Activated naive CD4-positive, alpha-beta T cell treated with anti-CD3 and anti-CD28 coated beads, Interleukin-2, amount 10 ng/mL, durations not matched to agents 7 days and 5 days (primary cell): ENCODE measurements at regions of chr7 and their contacts with region 1.

Region 1: DNA sequence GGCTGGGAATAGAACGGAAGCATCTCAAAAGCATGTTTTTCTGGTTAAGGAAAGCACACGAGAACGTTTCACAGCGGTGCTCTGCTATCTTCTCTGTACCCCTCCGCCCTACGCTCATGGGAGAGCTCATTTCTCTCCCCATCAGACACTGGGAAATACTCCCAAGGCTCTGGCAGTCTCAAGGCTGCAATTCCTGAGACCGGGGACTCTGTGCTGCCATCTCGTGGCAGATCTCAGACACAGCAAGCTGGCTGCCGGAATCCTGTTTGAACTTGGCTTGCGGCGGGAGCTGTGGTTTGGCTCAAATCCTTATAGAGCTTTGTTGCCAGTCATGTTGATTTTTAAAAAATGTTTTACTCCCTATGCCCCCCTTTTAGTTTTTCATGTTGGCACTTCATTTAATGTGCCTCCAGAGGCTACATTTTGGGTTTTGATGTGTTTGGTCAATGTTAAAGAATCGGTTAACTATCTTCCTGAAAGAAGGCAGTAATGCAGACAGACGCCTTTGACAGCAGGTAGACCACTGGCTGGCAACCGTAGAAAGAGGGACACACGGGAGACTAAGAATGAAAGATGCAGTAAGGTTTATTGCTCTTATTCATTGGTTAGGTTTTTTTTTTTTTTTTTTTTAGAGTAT is 27.6 kb downstream of the BMPER start:
- DNase-seq: peak; percentile 73
- H3K4me3 Mint-ChIP-seq: no peak overlapping the region
- H3K27ac Mint-ChIP-seq: no peak overlapping the region
- H3K4me1 Mint-ChIP-seq: no peaks in the 10 kb centered on the region
- H3K27me3 Mint-ChIP-seq: peaks cover 22% of the 10 kb centered on the region

Region 2: DNA sequence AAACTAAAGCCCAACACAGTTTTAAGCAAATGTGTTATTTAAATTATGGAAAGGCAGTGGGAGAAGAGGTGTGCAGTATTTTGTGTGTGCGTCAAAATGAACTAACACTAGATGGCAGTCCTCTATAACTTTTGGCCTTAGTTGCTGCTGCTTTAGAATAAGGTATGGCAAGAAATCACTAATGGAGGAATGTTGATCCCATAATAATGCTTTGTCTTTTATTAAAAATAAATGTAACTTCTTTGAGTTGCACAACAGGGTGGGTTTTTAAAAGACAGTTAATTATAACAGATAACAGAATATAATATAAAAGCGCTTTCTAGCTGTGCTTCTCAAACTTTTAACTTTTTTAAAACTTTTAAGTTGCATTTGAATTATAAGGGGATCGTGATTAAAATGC is 747.2 kb before region 1 on chr7:
- CTCF ChIA-PET with region 1: interaction called, 16 read pairs
- DNase-seq: no peak
- H3K4me3 Mint-ChIP-seq: no peak overlapping the region
- H3K27ac Mint-ChIP-seq: no peak overlapping the region
- H3K4me1 Mint-ChIP-seq: peaks cover 6% of the 10 kb centered on the region
- H3K27me3 Mint-ChIP-seq: no peaks in the 10 kb centered on the region

Region 3: DNA sequence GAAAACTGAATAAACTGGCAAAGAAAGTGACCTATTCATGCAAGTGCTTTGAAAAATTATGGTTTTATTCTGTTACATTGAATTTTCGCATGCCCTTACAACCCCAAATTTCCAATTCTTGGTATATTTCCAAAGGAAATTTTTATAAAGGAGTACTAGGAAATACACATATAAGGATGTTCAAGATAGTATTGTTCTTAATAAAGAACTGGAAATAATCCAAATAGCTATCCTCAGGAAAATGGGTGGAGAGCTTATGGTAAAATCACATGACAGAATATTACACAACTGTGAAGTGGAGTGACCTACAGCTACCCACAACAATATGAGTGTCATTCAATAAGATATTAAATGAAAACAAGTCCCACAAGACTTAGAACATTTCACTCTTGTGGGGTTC is 166.5 kb before region 1 on chr7:
- CTCF ChIA-PET with region 1: no interaction called
- DNase-seq: no peak
- H3K4me3 Mint-ChIP-seq: no peak overlapping the region
- H3K27ac Mint-ChIP-seq: no peak overlapping the region
- H3K4me1 Mint-ChIP-seq: no peaks in the 10 kb centered on the region
- H3K27me3 Mint-ChIP-seq: no peaks in the 10 kb centered on the region

Region 4: GRCh38 chr7:34177476-34177875 is 244.5 kb after region 1 on chr7:
- CTCF ChIA-PET with region 1: no interaction called
- DNase-seq: no peak
- H3K4me3 Mint-ChIP-seq: no peak overlapping the region
- H3K27ac Mint-ChIP-seq: no peak overlapping the region
- H3K4me1 Mint-ChIP-seq: no peaks in the 10 kb centered on the region
- H3K27me3 Mint-ChIP-seq: no peaks in the 10 kb centered on the region